Ascending aorta (tissue), 2 donors: ENCODE measurements at regions of chr1 and their contacts with region 1.

Region 1: DNA sequence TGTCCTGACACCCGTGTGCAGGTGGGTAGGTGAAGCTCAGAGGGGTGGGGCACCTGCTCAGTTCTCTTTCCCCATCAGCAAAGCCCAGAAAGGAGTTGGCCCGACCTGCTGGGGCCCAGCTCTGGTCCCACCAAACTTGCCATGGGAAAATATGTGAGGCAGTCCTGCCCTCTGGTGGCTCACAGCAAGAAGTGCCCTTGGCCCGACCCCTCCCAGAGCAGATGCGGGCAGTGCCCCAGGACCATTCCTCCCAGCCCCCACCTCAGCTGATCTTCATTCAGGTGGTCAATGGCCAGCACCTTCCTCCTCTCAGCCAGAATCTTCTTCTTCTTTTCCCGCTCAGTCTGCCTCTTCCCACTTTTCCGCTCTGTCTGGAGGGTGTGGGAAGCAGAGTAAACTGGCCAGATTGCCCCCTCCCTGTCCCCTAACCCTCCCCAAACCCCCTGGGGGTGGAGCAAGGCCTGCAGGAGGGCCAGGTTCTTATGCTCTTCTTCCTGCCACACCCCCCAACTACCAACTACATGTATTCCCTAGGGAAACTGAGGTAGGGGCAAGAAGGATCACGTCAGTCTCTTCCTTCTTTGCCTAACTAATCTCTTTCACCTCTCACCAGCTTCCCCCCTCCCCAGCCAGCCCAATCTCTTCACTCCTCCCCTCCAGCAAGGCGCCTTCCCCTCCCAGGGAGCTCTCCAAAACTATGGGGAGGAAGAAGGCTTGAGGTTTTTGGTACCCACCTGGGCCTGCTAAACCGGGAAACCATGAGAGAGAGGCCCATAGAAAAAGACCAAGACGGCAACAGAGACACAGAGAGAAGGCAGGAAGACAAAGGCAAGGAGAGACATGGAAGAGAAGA is 15.6 kb downstream of the TNNT2 start:
- DNase-seq: no peak
- H3K4me3 ChIP-seq: no peak overlapping the region
- H3K27ac ChIP-seq: no peak overlapping the region
- H3K4me1 ChIP-seq: no peaks in the 10 kb centered on the region
- H3K27me3 ChIP-seq: no peaks in the 10 kb centered on the region
- CTCF ChIP-seq: peak; percentile 29 to 52 (median 42)

Region 2: DNA sequence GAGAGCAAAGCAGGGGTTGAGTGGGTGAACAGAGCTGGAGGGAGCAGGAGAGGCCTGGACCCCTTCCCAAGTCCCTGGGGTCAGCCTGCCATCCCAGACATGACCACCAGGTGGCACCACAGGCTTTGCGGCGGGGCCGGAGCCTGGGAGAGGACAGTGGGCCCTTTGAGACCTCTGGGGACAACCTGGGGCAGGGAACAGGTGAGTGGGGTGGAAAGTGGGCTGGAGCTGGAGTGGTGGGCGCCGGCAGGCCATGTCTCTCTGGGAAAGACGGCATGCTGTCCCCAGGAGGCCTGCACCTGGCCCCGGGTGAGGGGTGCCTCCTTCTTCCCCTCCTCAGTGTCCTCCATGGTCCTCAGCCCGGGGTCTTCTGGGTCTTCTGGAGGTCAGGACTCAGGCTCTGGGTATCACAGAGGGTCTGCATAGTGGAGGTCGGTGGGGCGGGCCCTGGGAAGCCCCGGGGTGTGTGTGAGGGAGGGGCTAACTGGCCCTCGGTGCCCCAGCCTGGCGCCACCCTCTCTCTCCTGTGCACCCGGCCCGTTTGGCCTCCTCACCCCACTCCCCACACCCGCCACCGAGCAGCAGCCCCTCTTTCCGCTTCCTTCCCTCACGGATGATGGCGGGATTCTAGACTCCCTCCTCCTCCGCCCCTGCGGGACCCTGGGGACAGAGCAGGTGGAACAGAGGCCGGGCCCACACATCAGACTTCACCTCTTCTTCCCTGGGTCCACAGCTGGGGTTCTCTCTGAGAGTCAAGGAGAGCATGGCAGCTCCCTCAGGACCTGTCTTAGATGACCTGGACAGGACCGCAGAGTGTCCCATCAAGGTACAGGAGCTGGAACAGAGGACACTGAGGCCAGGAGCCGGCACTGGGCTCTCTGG is 107.0 kb before region 1 on chr1:
- intact Hi-C with region 1: loop called (anchors 2 kb)
- DNase-seq: no peak
- H3K4me3 ChIP-seq: no peak overlapping the region
- H3K27ac ChIP-seq: no peak overlapping the region
- H3K4me1 ChIP-seq: no peaks in the 10 kb centered on the region
- H3K27me3 ChIP-seq: peaks cover 3% of the 10 kb centered on the region
- CTCF ChIP-seq: peak; percentile 80 to 94 (median 86)

Region 3: GRCh38 chr1:201511941-201512539 is 150.2 kb after region 1 on chr1:
- intact Hi-C with region 1: no loop called
- DNase-seq: peak in 1 of 2 donors; percentile 85
- H3K4me3 ChIP-seq: peak overlapping the region in 1 of 2 donors; percentile 3
- H3K27ac ChIP-seq: peak overlapping the region; percentile 62 to 87
- H3K4me1 ChIP-seq: peaks cover 9 to 27% of the 10 kb centered on the region in 2 donors
- H3K27me3 ChIP-seq: no peaks in the 10 kb centered on the region
- CTCF ChIP-seq: no peak